T-cell (primary cell): ENCODE measurements at regions of chr20 and their contacts with region 1.

Region 1: DNA sequence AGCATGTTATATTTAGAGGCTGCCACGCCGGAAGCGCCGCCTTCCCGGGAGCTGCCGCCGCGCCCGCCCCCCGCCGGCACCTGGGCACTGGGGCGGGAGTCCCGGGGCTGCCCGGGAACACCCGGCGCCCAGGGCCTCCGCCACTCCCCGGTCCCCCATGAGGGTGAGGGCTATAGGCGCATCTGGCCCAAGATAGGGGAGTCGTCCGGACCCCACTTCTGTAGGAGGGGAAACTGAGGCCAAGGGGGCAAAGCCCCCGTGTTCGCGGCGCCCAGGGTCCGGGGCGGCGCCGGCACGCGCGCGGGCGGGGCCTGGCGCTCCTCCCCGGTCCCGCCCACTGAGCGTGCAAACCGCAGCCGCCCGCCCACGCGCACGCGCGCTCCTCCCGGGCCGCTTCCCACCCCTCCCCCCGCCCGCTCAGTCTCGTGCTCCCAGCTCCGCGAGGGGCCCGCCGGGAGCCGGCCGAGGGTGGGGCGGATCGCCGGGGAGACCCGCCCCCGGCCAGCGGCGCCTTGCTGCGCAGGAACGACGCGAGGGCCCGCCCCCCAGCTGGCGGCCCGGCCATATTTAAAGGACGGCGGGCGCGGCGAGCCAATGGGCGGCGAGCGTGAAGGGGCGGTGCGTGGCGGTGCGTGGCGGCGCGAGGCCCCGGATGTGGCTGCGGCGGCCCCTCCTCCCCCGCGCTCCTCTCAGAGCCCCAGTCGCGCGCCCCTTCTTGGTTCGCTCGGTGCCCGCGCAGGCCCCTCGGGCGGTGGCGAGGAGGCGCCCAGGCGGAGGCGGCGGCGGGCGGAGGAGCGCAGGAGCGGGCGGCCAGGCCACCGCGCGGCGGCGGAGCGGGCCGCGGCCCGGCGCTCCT is at the start of gene LSM14B:
- DNase-seq: peak; percentile 85 to 99 (median 93)
- ATAC-seq: peak; percentile 80 to 89 (median 84)
- H3K4me3 ChIP-seq: peak within 1 kb of the TSS; percentile 55 to 78
- H3K4me3 Mint-ChIP-seq: peak within 1 kb of the TSS; percentile 87 to 88 (median 87)
- H3K27ac ChIP-seq: peak within 1 kb of the TSS; percentile 64
- H3K27ac Mint-ChIP-seq: peak within 1 kb of the TSS; percentile 89 to 92
- H3K4me1 ChIP-seq: peaks cover 19 to 55% of the 10 kb centered on the region in 2 experiments
- H3K4me1 Mint-ChIP-seq: peaks cover 50 to 63% (median 60%) of the 10 kb centered on the region in 3 donors
- H3K27me3 ChIP-seq: no peaks in the 10 kb centered on the region
- H3K27me3 Mint-ChIP-seq: no peaks in the 10 kb centered on the region
- total RNA-seq, gene LSM14B: 40.5 to 55.5 (median 54.4) TPM

Region 2: DNA sequence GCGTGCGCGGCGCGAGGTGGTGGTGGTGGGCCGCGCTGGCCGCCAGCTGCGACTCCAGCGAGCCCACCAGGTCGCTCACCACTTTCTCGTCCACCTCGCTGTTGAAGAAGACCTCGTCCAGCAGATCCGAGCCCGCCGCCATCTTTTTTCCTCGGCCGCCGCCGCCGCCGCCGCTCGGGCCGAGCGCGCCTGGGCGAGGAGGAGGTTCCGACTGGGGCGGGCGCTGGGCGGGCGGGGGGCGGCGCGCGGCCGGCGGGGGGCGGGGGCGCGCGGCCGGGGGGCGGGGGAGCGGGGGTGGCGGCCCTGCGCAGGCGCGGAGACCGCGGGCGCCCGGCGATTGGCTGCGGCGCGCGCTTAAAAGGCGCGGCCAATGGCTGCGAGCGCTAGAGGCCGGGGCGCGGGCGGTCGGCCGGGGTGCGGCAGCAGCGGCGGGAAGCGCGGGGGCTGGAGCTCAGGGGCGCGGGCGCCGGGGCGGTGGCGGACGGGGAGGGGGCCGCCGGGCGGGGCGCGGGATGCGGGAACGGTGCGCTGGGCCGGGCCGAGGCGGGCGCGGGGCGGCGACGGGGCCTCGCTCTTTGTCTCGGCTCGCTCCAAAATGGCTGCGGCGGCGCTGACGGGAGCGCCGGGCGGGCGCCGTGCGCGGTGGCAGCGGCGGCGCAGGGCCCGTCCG is 56.2 kb before region 1 on chr20 and contains the start of gene TAF4:
- CTCF ChIA-PET with region 1: no interaction called
- POLR2A ChIA-PET with region 1: interaction called in 1 of 2 experiments, 14 read pairs
- DNase-seq: peak; percentile 53 to 91 (median 72)
- ATAC-seq: peak; percentile 77 to 83 (median 80)
- H3K4me3 ChIP-seq: peak within 1 kb of the TSS; percentile 64 to 94
- H3K4me3 Mint-ChIP-seq: peak within 1 kb of the TSS; percentile 83 to 89 (median 86)
- H3K27ac ChIP-seq: peak within 1 kb of the TSS; percentile 15
- H3K27ac Mint-ChIP-seq: peak within 1 kb of the TSS; percentile 89 to 93
- H3K4me1 ChIP-seq: peaks cover 26 to 44% of the 10 kb centered on the region in 2 experiments
- H3K4me1 Mint-ChIP-seq: peaks cover 49 to 54% (median 50%) of the 10 kb centered on the region in 3 donors
- H3K27me3 ChIP-seq: peaks cover 0 to 9% of the 10 kb centered on the region in 2 experiments
- H3K27me3 Mint-ChIP-seq: peaks cover 0 to 6% of the 10 kb centered on the region in 2 donors
- total RNA-seq, gene TAF4: 21.7 to 39.5 (median 35.2) TPM